ENCODE measurements at regions of chr20 and their contacts with region 1.

Region 1: GRCh38 chr20:59645761-59646171 is 41.4 kb downstream of the PHACTR3 start:
- DNase-seq: peak in 5 of 10 donors; percentile 50 to 93 (median 69)

Region 2: GRCh38 chr20:59603781-59604541 is 41.8 kb before region 1 on chr20 and contains the start of gene PHACTR3:
- intact Hi-C with region 1: loop called (anchors 5 kb)
- DNase-seq: peak; percentile 67 to 96 (median 82)